ENCODE measurements at regions of chr7 and their contacts with region 1.

Region 1: GRCh38 chr7:116984917-116985316 is 31.6 kb downstream of the ST7 start:
- DNase-seq: no peak
- H3K4me3 ChIP-seq: no peak overlapping the region
- H3K27ac ChIP-seq: no peak overlapping the region
- H3K4me1 ChIP-seq: peaks cover 9% of the 10 kb centered on the region
- H3K27me3 ChIP-seq: no peaks in the 10 kb centered on the region
- CTCF ChIP-seq: peak; percentile 63 to 82

Region 2: GRCh38 chr7:116963234-116963633 is 21.7 kb before region 1 on chr7:
- CTCF ChIA-PET with region 1: no interaction called
- dilution Hi-C with region 1: no loop called
- in situ Hi-C with region 1: no loop called
- intact Hi-C with region 1: no loop called
- DNase-seq: no peak
- H3K4me3 ChIP-seq: no peak overlapping the region
- H3K27ac ChIP-seq: no peak overlapping the region
- H3K4me1 ChIP-seq: no peaks in the 10 kb centered on the region
- H3K27me3 ChIP-seq: no peaks in the 10 kb centered on the region
- CTCF ChIP-seq: no peak

Region 3: DNA sequence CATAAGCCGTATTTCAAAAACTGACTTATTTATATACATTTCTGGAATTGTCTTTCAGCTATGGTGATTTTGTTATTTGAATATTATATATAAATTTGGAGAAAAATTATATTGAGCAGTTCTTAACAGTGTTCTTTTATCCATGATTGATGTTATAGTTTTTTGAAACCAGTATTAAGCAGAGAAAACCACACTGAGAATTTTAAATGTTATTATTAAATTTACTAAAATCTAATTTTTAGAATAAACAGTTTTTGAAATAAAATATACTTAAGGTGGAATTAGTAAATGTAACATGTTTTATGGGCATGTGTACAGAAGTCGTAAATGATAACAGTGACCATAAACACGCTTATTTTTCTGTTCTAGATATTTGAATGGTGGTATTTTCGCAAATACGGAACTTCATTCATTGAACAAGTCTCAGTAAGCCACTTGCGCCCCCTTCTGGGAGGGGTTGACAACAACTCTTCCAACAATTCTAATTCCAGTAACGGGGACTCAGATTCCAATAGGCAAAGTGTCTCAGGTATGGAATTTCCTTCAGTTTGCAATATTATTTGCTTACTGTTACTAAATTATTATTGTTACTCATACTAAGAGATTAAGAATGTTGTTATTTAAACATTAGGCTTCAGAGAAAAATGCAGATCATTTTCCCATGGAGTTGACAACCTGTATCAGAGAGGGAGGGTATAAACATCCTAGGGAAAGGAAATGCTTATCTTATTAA is 134.4 kb after region 1 on chr7:
- CTCF ChIA-PET with region 1: interaction called, 7 read pairs
- dilution Hi-C with region 1: no loop called
- in situ Hi-C with region 1: loop called (anchors 5 to 10 kb)
- intact Hi-C with region 1: loop called (anchors 1 kb)
- DNase-seq: peak; percentile 57
- H3K4me3 ChIP-seq: no peak overlapping the region
- H3K27ac ChIP-seq: no peak overlapping the region
- H3K4me1 ChIP-seq: peaks cover 4% of the 10 kb centered on the region
- H3K27me3 ChIP-seq: no peaks in the 10 kb centered on the region
- CTCF ChIP-seq: peak; percentile 86 to 94

Region 4: DNA sequence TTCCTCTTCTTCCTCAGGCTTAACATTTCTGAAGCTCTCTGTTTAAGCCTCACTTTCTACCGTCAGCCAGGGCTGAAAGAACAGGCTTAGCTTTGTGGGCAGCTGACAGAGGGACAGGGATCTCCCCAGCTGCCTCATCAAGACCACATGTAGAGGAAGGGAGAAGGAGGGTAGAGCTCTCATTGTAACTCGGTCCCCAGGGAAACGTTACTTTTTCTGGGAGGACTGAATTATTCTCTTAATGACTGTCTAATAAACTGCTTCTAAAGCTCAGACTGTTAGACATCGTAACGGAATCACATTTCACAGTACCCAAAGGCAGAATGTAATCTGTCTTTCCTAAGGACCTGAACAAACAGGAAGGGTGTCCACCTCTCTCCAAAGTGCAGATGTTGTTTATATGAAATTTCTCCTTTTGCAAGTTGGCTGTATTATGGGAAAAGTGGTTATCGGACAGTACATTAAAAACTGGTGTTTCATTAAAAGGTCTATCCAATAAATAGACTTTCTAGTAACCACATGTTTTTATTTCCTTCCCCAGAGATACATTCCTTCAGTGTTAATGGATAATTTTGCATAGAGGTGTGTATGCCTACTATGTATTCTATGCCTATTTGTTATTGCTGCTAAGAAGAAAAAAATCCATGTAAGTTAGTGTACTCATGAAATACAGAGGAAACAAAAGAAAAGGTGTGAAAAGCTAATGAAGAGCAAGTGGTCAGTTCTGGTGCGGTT is 744.1 kb after region 1 on chr7:
- CTCF ChIA-PET with region 1: no interaction called
- dilution Hi-C with region 1: no loop called
- in situ Hi-C with region 1: no loop called
- intact Hi-C with region 1: no loop called
- DNase-seq: no peak
- H3K4me3 ChIP-seq: no peak overlapping the region
- H3K27ac ChIP-seq: no peak overlapping the region
- H3K4me1 ChIP-seq: no peaks in the 10 kb centered on the region
- H3K27me3 ChIP-seq: no peaks in the 10 kb centered on the region
- CTCF ChIP-seq: no peak